PC-3 (cell line): ENCODE measurements at regions of chr2 and their contacts with region 1.

Region 1: DNA sequence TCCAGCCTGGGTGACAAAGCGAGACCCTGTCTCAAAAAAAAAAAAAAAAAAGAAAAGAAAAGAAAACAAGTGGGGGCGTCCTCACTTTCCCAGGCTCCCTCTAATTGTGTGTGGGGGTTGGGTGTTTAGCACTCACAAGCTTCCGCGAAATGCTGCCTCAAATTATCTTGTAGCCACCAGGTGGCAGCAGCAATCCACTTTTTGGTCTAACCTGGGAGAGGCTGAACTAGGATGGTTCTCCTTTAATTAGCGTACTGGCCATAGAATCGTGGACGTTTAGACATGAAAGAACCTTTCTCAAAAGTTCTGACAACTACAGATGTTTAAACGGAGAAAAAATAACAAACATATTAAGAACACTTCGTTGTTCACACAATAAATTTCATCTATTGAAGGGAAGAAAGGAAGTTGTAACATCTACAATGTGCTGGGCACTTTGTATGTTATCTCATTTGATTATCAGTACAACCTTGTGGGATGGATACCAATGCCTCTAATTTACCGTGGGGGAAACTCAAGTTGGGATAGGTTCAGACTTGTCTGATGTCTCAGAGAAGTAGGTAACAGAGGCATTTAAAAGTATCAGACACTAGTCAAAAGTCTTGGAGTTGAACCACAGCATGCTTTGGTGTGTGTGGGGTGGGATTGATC is 122.7 kb upstream of the NABP1 start:
- DNase-seq: peak; percentile 94
- ATAC-seq: peak; percentile 97
- H3K4me3 ChIP-seq: no peak overlapping the region
- H3K27ac ChIP-seq: no peak overlapping the region
- H3K4me1 ChIP-seq: no peaks in the 10 kb centered on the region
- H3K27me3 ChIP-seq: no peaks in the 10 kb centered on the region
- CTCF ChIP-seq: peak; percentile 86

Region 2: DNA sequence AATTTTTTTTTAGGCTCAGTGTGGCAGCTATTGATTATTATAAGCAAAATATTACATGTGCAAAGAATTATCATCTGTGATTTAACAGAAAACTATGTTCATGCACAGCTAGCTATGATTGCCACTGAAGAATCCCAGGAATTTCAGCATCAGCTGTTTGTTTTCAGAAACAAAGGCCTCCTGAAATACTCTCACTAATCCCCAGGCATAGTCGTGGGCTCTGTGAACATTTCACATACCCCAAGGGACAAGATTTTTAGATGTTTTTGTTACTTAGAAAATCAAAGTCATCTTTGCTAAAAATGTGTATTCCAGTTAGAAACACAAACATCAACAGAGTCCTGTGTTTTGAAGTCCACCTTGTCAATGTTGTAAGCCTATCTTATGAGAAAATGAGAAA is 153.9 kb before region 1 on chr2:
- CTCF ChIA-PET with region 1: no interaction called
- POLR2A ChIA-PET with region 1: no interaction called
- intact Hi-C with region 1: no loop called
- DNase-seq: no peak
- ATAC-seq: no peak
- H3K4me3 ChIP-seq: no peak overlapping the region
- H3K27ac ChIP-seq: no peak overlapping the region
- H3K4me1 ChIP-seq: peaks cover 28% of the 10 kb centered on the region
- H3K27me3 ChIP-seq: no peaks in the 10 kb centered on the region
- CTCF ChIP-seq: no peak

Region 3: GRCh38 chr2:191728750-191729624 is 173.8 kb after region 1 on chr2:
- CTCF ChIA-PET with region 1: interaction called, 6 read pairs
- POLR2A ChIA-PET with region 1: no interaction called
- intact Hi-C with region 1: loop called (anchors 2 kb)
- DNase-seq: peak; percentile 44
- ATAC-seq: peak; percentile 78
- H3K4me3 ChIP-seq: no peak overlapping the region
- H3K27ac ChIP-seq: no peak overlapping the region
- H3K4me1 ChIP-seq: peaks cover 8% of the 10 kb centered on the region
- H3K27me3 ChIP-seq: no peaks in the 10 kb centered on the region
- CTCF ChIP-seq: peak; percentile 32

Region 4: DNA sequence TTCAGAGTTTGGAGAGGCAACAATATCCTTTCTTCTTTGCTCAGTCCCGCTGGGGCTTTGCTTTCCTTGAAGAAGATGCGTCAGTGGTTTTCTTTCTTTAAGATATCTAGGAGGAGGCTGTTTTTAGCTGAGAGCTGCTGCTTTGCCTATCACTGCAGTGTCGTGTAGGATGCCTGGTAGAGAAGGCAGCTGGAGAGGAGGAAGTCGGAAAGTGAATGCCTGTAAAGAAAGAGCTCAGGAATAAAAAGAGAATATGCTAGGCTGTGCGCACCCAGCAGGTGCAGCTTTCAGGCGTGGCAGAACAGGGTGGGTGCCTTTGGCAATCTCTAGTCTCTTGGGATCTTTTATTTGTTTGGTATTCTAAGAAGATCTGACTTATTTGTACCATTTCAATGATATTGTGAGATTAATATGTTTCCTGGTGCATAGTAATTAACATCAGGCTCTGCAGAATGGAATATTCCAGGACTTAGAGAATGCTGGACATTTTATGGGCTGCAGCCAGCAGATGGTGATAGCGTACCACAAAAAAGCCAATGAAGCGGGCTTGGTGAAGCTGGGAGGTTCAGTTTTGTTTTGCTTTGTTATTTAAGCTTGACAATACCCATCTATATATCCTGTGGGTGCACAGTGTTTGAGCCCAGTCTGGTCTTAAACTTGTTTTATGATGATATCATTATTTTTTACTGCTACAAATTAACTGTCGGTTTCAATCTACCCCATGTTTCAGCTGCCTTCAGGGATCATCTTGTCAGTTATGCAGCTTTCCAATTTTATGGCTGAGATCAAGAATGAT is 256.8 kb after region 1 on chr2:
- CTCF ChIA-PET with region 1: interaction called, 3 read pairs
- POLR2A ChIA-PET with region 1: no interaction called
- intact Hi-C with region 1: loop called (anchors 1 kb)
- DNase-seq: peak; percentile 85
- ATAC-seq: peak; percentile 93
- H3K4me3 ChIP-seq: no peak overlapping the region
- H3K27ac ChIP-seq: no peak overlapping the region
- H3K4me1 ChIP-seq: no peaks in the 10 kb centered on the region
- H3K27me3 ChIP-seq: no peaks in the 10 kb centered on the region
- CTCF ChIP-seq: peak; percentile 91

Region 5: GRCh38 chr2:192162392-192163042 is 607.3 kb after region 1 on chr2:
- CTCF ChIA-PET with region 1: interaction called, 5 read pairs
- POLR2A ChIA-PET with region 1: no interaction called
- intact Hi-C with region 1: loop called (anchors 2 kb)
- DNase-seq: peak; percentile 87
- ATAC-seq: peak; percentile 92
- H3K4me3 ChIP-seq: no peak overlapping the region
- H3K27ac ChIP-seq: no peak overlapping the region
- H3K4me1 ChIP-seq: peaks cover 5% of the 10 kb centered on the region; the same call in 1 of the 2 replicates
- H3K27me3 ChIP-seq: 0 out of 2 replicates have a peak, but pooled peaks cover 1% of the 10 kb centered on the region
- CTCF ChIP-seq: peak; percentile 97

Region 6: DNA sequence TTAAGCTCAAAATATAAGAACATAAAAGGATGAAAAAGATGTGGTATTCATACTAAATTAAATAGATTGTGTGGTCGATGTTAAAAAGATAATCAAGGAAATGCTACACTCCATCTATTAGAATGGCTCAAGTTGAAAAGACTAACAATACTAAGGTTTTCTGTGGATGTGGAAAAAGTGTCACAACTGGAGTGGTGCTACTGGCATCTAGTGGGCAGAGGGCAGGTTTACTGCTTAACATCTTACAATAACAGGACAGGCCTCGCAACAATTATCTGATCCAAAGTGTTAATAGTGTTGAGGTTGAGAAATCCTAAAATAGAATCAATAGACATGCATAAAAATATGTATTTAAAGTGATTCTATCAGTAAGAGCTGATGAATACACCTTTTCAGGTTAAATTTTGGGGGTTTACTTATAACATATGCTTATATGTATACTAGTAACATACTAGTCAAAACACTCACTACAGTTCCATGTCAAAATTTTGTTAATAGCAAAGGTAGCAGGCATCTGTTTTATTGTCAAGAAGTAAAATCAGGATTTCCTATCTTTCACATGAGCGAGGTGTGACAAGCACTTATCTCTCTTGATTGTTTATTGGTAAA is 731.0 kb after region 1 on chr2:
- CTCF ChIA-PET with region 1: no interaction called
- POLR2A ChIA-PET with region 1: no interaction called
- intact Hi-C with region 1: loop called (anchors 5 kb)
- DNase-seq: peak; percentile 66
- ATAC-seq: peak; percentile 81
- H3K4me3 ChIP-seq: no peak overlapping the region
- H3K27ac ChIP-seq: no peak overlapping the region
- H3K4me1 ChIP-seq: no peaks in the 10 kb centered on the region
- H3K27me3 ChIP-seq: 0 out of 2 replicates have a peak, but pooled peaks cover 3% of the 10 kb centered on the region
- CTCF ChIP-seq: peak; percentile 77